ENCODE measurements at regions of chr9 and their contacts with region 1.

Region 1: DNA sequence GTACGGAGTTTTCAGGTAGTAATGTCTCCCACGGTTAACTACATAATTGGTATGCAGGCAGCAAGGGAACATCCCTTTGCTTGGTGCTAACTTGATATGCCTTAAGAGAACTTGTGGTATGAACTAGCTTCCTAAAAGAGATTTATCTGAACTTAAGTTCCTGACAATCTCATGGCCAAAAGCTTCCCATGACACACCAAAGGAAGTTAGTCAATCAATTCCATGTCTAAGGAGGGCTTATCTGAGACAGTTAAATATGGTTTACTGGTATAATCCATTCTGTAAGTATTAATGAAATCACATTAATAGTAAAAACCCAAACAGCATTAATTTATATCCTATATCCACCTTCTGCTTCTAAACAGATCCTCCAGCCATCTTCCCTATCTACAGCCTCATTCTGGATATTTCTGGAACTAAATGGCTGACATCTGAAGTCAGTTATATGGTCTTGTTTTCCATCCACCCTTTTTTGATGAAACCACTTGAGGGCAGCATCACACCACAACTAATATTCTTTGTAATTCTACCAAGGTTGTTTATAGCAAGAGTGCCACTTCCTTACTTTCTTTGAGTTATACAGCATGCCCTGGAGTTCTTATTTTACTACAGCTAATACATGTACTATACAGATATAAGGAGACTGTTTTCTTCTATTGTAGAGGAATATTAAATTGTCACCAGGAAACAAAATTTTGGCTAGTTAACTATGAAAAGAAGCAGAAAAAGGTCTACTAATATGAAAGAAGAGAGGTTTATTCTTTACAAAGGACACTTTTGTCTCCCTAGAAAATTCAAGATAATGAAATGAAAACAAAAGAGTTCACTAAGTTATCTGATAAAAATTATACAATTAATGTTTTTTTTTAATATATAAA is 34.7 kb downstream of the SHOC1 start:
- DNase-seq: peak; percentile 79
- ATAC-seq: peak; percentile 97
- H3K4me3 ChIP-seq: no peak overlapping the region
- H3K27ac ChIP-seq: no peak overlapping the region
- H3K4me1 ChIP-seq: no peaks in the 10 kb centered on the region
- H3K27me3 ChIP-seq: no peaks in the 10 kb centered on the region
- CTCF ChIP-seq: peak; percentile 51 to 73 (median 56); a peak in 4 of 6 replicates
- EP300 ChIP-seq: no peak
- POLR2A ChIP-seq: no peak
- RAD21 ChIP-seq: peak; percentile 95

Region 2: GRCh38 chr9:111896353-111896958 is 136.5 kb after region 1 on chr9 and contains the start of gene UGCG:
- CTCF ChIA-PET with region 1: interaction called, 3 read pairs
- POLR2A ChIA-PET with region 1: no interaction called
- RAD21 ChIA-PET with region 1: interaction called, 7 read pairs
- SMC1A ChIA-PET with region 1: interaction called, 3 read pairs
- in situ Hi-C with region 1: loop called (anchors 5 kb)
- intact Hi-C with region 1: loop called (anchors 2 kb)
- DNase-seq: no peak
- ATAC-seq: peak; percentile 79
- H3K4me3 ChIP-seq: peak within 1 kb of the TSS; percentile 80
- H3K27ac ChIP-seq: peak within 1 kb of the TSS; percentile 93
- H3K4me1 ChIP-seq: no peaks in the 10 kb centered on the region; the same call in 1 of the 2 replicates
- H3K27me3 ChIP-seq: no peaks in the 10 kb centered on the region
- CTCF ChIP-seq: no peak
- EP300 ChIP-seq: 0 out of 4 replicates have a peak, but pooled peaks of 1 of the 2 experiments have one; percentile 14
- POLR2A ChIP-seq: peak; percentile 93
- RAD21 ChIP-seq: 0 out of 2 replicates have a peak, but pooled peaks have one; percentile 2
- polyA plus RNA-seq, gene UGCG: 48.0 to 62.1 TPM

Region 3: DNA sequence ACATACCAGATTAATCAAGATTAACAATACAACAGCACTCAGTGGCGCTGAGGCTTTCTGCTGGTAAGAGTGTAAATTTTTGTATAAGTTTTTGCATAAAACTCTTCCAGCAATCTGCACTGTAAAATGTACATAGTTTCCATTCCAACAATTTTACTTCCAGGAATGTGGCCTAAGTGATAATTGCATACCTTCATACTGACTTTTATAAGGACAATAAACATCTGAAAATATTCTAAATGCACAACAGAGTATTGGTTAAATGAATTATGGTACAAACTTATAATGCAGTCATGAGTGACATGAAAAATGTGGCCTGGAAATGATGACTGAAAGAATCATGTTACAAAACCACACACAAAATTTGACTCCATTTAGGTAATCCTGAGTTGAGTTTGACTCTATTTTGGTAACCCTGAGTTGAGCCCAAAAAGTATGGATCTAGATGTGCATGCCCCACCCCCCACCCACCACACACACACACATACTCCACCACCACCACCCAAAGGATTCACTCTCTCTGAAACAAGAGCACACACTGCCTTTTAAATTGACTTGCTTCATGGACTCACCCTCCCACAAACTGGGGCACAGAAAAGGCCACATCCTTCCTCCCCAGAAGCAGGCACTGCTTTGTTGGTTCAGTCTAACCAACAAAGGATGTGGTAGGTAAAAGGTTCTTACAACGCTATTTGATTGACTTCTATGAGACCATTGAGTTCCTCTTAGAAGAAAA is 277.4 kb after region 1 on chr9:
- CTCF ChIA-PET with region 1: no interaction called
- POLR2A ChIA-PET with region 1: interaction called, 3 read pairs
- RAD21 ChIA-PET with region 1: interaction called, 3 read pairs
- SMC1A ChIA-PET with region 1: interaction called, 4 read pairs
- in situ Hi-C with region 1: no loop called
- intact Hi-C with region 1: loop called (anchors 2 kb)
- DNase-seq: peak; percentile 97
- ATAC-seq: peak; percentile 71
- H3K4me3 ChIP-seq: no peak overlapping the region
- H3K27ac ChIP-seq: peak overlapping the region; percentile 97
- H3K4me1 ChIP-seq: peaks cover 63% of the 10 kb centered on the region
- H3K27me3 ChIP-seq: no peaks in the 10 kb centered on the region
- CTCF ChIP-seq: no peak
- EP300 ChIP-seq: peak; percentile 74 to 78; a peak in 3 of 4 replicates
- POLR2A ChIP-seq: peak; percentile 69
- RAD21 ChIP-seq: peak; percentile 44; the same call in 1 of the 2 replicates

Region 4: GRCh38 chr9:112086627-112087026 is 326.6 kb after region 1 on chr9:
- CTCF ChIA-PET with region 1: interaction called, 292 read pairs
- POLR2A ChIA-PET with region 1: no interaction called
- RAD21 ChIA-PET with region 1: interaction called, 9 read pairs
- SMC1A ChIA-PET with region 1: interaction called, 22 read pairs
- in situ Hi-C with region 1: no loop called
- intact Hi-C with region 1: no loop called
- DNase-seq: no peak
- ATAC-seq: peak; percentile 36; the same call in 1 of the 3 replicates
- H3K4me3 ChIP-seq: no peak overlapping the region
- H3K27ac ChIP-seq: no peak overlapping the region
- H3K4me1 ChIP-seq: no peaks in the 10 kb centered on the region; the same call in 1 of the 2 replicates
- H3K27me3 ChIP-seq: no peaks in the 10 kb centered on the region
- CTCF ChIP-seq: peak; percentile 47 to 59 (median 51); a peak in 5 of 6 replicates
- EP300 ChIP-seq: no peak
- POLR2A ChIP-seq: no peak
- RAD21 ChIP-seq: peak; percentile 83

Region 5: GRCh38 chr9:112361601-112362000 is 601.6 kb after region 1 on chr9:
- CTCF ChIA-PET with region 1: interaction called, 23 read pairs
- POLR2A ChIA-PET with region 1: interaction called, 3 read pairs
- RAD21 ChIA-PET with region 1: interaction called, 14 read pairs
- SMC1A ChIA-PET with region 1: interaction called, 28 read pairs
- in situ Hi-C with region 1: loop called (anchors 5 kb)
- intact Hi-C with region 1: loop called (anchors 1 kb)
- DNase-seq: no peak
- ATAC-seq: peak; percentile 71
- H3K4me3 ChIP-seq: no peak overlapping the region
- H3K27ac ChIP-seq: no peak overlapping the region
- H3K4me1 ChIP-seq: no peaks in the 10 kb centered on the region
- H3K27me3 ChIP-seq: no peaks in the 10 kb centered on the region
- CTCF ChIP-seq: peak in 2 of 3 experiments; percentile 30 to 55; a peak in 2 of 6 replicates
- EP300 ChIP-seq: no peak
- POLR2A ChIP-seq: no peak
- RAD21 ChIP-seq: peak; percentile 60

Region 6: DNA sequence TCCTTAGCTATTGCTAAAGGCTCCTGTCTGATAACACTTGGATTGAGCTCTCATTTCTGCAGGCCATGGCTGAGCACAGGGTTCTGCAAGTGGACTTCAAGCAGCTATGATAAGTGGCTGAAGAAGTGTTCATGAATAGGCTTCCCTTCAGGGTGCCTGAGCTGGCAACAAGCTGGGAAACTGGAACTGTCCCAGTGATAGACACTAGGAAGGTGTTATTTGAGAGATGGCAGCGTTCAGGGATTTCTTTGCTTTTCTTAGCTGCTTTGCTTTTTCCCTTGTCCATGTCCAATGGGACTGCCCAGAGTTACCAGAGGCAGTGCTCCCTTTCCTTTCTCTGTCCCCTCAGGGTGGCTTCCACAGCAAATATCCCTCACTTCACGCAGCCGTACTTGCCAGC is 882.1 kb after region 1 on chr9:
- CTCF ChIA-PET with region 1: no interaction called
- POLR2A ChIA-PET with region 1: no interaction called
- RAD21 ChIA-PET with region 1: no interaction called
- SMC1A ChIA-PET with region 1: no interaction called
- in situ Hi-C with region 1: no loop called
- intact Hi-C with region 1: no loop called
- DNase-seq: no peak
- ATAC-seq: no peak
- H3K4me3 ChIP-seq: no peak overlapping the region
- H3K27ac ChIP-seq: no peak overlapping the region
- H3K4me1 ChIP-seq: no peaks in the 10 kb centered on the region
- H3K27me3 ChIP-seq: no peaks in the 10 kb centered on the region
- CTCF ChIP-seq: no peak
- EP300 ChIP-seq: no peak
- POLR2A ChIP-seq: no peak
- RAD21 ChIP-seq: no peak